Calu3 (cell line): ENCODE measurements at regions of chr21 and their contacts with region 1.

Region 1: DNA sequence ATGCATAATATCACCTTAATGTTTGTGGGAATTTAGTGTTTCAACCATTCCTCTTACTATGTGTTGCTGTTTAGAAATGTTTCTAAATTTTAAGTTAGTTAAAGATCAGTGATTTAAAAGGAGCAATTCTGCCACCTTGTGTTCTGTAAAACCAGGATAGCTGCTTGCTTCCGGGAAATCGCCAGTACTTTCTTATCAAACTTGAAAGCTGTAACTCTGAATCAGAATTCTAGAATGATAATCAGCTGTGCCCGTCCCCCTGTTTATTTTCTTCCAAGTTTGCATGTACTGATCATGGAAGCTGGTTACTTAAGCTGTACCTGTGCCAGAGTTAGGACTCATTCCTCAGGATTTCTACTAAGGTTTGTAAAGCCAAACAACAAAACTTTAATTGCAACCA is 656.4 kb downstream of the LTN1 start:
- DNase-seq: peak; percentile 9
- H3K4me3 Mint-ChIP-seq: no peak overlapping the region
- H3K27ac Mint-ChIP-seq: no peak overlapping the region
- H3K4me1 Mint-ChIP-seq: peaks cover 14% of the 10 kb centered on the region
- H3K27me3 Mint-ChIP-seq: no peaks in the 10 kb centered on the region
- CTCF ChIP-seq: peak; percentile 22

Region 2: DNA sequence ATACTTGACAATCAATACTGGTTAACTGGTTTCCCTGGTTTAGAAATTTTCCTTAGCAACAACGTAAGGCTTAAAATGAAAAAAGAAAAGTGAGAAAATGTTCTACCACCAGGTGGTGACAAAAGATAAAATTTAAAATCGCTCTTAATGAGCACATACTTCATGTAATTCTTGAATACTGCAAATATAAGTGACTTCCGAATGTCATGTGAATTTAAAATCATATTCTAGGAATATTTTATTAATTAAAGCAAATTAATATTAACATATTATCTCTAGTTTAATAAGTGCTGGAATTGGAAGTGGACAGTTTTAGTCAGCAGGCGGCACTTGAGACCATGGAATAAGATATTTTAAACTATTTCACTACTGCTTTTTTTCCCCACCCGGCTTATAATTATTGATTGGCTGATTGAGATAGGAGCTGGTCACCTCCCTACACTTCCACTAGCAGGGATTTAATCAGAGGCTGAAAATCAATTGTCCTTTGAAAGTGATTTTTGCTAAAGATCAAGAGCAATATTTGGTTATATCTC is 1486.1 kb before region 1 on chr21:
- CTCF ChIA-PET with region 1: no interaction called
- intact Hi-C with region 1: loop called (anchors 1 kb)
- DNase-seq: no peak
- H3K4me3 Mint-ChIP-seq: no peak overlapping the region
- H3K27ac Mint-ChIP-seq: no peak overlapping the region
- H3K4me1 Mint-ChIP-seq: peaks cover 16% of the 10 kb centered on the region
- H3K27me3 Mint-ChIP-seq: peaks cover 19% of the 10 kb centered on the region
- CTCF ChIP-seq: peak; percentile 49

Region 3: DNA sequence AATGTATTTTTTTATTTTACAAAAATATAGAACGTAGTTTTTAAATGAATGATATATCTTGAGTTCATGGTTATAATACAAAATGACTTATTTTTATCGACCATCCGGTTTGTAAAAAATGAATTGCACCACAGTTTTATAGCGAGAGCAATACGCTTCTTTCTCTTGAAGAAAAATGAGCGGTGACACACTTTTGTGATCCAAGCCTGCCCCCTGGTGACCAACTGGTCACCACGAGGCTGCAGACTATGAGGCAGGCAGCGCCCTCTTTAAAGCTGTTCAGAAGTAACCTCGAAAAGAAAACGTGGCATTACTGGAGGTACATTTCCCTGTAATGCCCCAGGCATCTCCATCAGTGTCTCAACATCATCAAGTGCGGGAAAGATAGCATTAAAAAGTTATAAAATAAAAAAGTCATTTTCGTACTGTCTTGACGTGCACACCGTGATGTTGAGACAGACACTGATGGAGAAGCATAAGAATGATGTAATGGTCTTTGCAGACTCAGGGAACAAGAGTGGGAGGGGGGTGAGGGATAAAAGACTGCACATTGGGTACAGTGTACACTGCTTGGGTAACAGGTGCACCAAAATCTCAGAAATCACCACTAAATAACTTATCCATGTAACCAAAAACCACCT is 635.2 kb before region 1 on chr21:
- CTCF ChIA-PET with region 1: interaction called, 3 read pairs
- intact Hi-C with region 1: loop called (anchors 5 kb)
- DNase-seq: peak; percentile 77
- H3K4me3 Mint-ChIP-seq: no peak overlapping the region
- H3K27ac Mint-ChIP-seq: no peak overlapping the region
- H3K4me1 Mint-ChIP-seq: peaks cover 6% of the 10 kb centered on the region
- H3K27me3 Mint-ChIP-seq: no peaks in the 10 kb centered on the region
- CTCF ChIP-seq: peak; percentile 83

Region 4: GRCh38 chr21:27759091-27759659 is 577.1 kb before region 1 on chr21:
- CTCF ChIA-PET with region 1: interaction called, 11 read pairs
- intact Hi-C with region 1: no loop called
- DNase-seq: peak; percentile 43
- H3K4me3 Mint-ChIP-seq: no peak overlapping the region
- H3K27ac Mint-ChIP-seq: no peak overlapping the region
- H3K4me1 Mint-ChIP-seq: peaks cover 26% of the 10 kb centered on the region
- H3K27me3 Mint-ChIP-seq: no peaks in the 10 kb centered on the region
- CTCF ChIP-seq: peak; percentile 62

Region 5: DNA sequence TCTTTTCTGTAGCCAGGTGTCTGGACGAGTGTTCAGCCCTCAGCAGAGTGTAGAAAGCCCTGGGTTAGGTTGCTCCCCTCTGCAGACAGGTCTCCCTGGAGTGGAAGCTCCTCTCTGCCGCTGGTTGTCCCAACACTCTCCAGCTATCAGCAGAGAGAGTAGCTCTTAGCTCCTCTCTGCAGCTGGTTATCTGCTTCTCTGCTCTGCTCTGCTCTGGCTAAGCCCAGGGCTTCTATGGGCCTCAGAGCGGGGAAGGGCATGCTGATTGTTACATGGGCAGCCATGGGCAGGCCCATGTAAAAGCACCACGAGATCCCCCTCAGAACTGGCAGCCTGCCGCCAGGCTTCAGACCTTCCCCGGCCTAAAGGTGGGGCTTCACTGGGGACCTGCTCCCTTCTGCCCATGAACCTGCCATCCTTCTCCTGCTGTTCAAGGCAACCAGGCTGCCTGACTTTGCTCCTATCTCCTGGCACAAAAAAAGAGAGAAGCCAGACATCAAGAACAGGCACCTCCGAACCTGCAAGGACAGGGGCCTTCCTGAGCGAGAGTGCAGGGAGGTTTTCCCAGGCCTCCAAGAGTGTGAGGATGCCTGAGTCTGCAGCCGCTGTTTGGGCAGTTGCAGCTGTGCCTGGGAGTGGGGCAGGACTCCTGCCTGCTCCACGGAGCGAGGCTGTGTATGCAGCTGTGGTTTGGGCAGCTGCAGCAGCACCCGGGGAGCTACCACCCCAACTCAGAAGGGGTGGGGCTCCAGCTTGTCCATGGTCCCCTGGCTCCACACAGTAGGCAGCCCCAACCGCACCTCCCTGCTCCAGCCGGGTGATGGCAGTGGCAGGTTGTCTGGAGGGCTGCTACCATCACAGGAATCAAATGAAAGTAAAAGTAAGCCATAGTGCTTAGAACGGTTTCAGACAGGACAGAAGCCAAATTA is 317.3 kb before region 1 on chr21:
- CTCF ChIA-PET with region 1: no interaction called
- intact Hi-C with region 1: loop called (anchors 2 kb)
- DNase-seq: peak; percentile 64
- H3K4me3 Mint-ChIP-seq: peak overlapping the region; percentile 30
- H3K27ac Mint-ChIP-seq: peak overlapping the region; percentile 36
- H3K4me1 Mint-ChIP-seq: no peaks in the 10 kb centered on the region
- H3K27me3 Mint-ChIP-seq: no peaks in the 10 kb centered on the region
- CTCF ChIP-seq: no peak

Region 6: DNA sequence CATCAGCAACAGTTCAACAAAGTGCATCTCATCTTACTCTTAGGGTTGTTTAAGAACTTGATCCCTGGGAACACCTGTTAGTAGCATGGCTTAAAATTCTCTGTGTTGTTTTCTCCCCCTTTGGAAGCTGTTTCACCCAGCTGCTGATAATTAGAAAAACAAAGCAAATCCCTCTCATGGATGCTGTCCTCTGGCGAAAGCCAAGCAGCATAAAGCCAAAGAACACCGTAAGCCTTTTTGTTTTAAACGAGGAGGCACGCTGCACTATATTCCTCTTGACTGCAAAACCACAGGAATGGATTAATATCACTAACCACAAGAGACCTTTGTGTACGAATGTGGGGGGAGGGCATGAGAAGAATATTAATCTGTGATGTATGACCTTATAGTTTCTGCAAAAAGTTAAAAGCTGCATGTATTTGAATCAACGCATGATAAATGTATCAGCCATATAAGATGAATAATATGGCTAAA is 266.8 kb before region 1 on chr21:
- CTCF ChIA-PET with region 1: no interaction called
- intact Hi-C with region 1: loop called (anchors 5 kb)
- DNase-seq: no peak
- H3K4me3 Mint-ChIP-seq: no peak overlapping the region
- H3K27ac Mint-ChIP-seq: no peak overlapping the region
- H3K4me1 Mint-ChIP-seq: peaks cover 13% of the 10 kb centered on the region
- H3K27me3 Mint-ChIP-seq: no peaks in the 10 kb centered on the region
- CTCF ChIP-seq: no peak

Region 7: GRCh38 chr21:28410256-28410655 is 73.9 kb after region 1 on chr21:
- CTCF ChIA-PET with region 1: no interaction called
- intact Hi-C with region 1: no loop called
- DNase-seq: no peak
- H3K4me3 Mint-ChIP-seq: no peak overlapping the region
- H3K27ac Mint-ChIP-seq: no peak overlapping the region
- H3K4me1 Mint-ChIP-seq: no peaks in the 10 kb centered on the region
- H3K27me3 Mint-ChIP-seq: no peaks in the 10 kb centered on the region
- CTCF ChIP-seq: no peak

Region 8: DNA sequence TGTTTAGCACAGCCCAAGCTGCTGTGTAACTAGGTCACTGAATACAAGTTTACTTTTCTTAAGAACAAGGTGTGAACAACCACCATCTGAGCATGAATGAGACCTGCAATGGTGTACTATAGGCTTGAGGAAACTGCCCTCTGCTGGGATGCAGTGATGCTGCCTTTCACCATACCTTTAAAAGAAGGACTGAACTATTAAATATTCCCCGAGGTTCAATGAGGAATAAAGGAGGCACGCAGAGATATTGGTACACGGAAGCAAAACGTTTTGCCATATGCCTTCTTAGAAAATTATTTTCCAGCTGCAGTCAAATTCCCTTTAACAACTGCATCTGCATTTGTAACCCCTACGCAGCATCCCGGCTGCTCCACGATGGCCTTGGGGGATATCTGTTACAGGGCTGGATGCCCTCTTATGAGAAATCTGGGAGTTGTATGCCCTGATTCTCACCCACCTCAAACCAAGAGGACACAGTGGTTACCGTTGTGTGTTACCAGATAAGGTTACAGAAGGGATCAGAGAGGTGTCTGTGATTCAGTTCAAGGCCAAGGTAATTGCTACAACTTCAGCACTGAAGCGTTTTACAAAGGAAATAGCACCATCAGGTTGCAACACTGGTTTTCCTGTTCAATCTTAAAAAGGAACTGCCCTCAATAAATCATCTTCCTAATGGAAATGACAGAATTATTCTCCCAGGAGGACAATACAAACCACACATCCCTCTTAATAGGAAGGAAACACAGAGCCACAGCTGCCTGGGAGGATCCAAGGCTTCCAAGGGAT is 185.9 kb after region 1 on chr21:
- CTCF ChIA-PET with region 1: no interaction called
- intact Hi-C with region 1: loop called (anchors 5 kb)
- DNase-seq: peak; percentile 17
- H3K4me3 Mint-ChIP-seq: no peak overlapping the region
- H3K27ac Mint-ChIP-seq: no peak overlapping the region
- H3K4me1 Mint-ChIP-seq: no peaks in the 10 kb centered on the region
- H3K27me3 Mint-ChIP-seq: no peaks in the 10 kb centered on the region
- CTCF ChIP-seq: peak; percentile 16